MCF 10A (cell line): ENCODE measurements at regions of chr1 and their contacts with region 1.

Region 1: GRCh38 chr1:119140177-119141019 is at the start of gene WARS2:
- DNase-seq: peak; percentile 98
- H3K4me3 Mint-ChIP-seq: no peak within 1 kb of the TSS
- H3K27ac Mint-ChIP-seq: no peak within 1 kb of the TSS
- H3K4me1 Mint-ChIP-seq: peaks cover 29% of the 10 kb centered on the region
- H3K27me3 Mint-ChIP-seq: no peaks in the 10 kb centered on the region
- CTCF ChIP-seq: no peak
- total RNA-seq, gene WARS2: 17.4 and 27.7 TPM in 2 replicates

Region 2: GRCh38 chr1:118960026-118960561 is 180.3 kb before region 1 on chr1:
- CTCF ChIA-PET with region 1: no interaction called
- POLR2A ChIA-PET with region 1: no interaction called
- intact Hi-C with region 1: loop called (anchors 1 kb)
- DNase-seq: no peak
- H3K4me3 Mint-ChIP-seq: no peak overlapping the region
- H3K27ac Mint-ChIP-seq: no peak overlapping the region
- H3K4me1 Mint-ChIP-seq: peaks cover 24% of the 10 kb centered on the region
- H3K27me3 Mint-ChIP-seq: no peaks in the 10 kb centered on the region
- CTCF ChIP-seq: no peak

Region 3: DNA sequence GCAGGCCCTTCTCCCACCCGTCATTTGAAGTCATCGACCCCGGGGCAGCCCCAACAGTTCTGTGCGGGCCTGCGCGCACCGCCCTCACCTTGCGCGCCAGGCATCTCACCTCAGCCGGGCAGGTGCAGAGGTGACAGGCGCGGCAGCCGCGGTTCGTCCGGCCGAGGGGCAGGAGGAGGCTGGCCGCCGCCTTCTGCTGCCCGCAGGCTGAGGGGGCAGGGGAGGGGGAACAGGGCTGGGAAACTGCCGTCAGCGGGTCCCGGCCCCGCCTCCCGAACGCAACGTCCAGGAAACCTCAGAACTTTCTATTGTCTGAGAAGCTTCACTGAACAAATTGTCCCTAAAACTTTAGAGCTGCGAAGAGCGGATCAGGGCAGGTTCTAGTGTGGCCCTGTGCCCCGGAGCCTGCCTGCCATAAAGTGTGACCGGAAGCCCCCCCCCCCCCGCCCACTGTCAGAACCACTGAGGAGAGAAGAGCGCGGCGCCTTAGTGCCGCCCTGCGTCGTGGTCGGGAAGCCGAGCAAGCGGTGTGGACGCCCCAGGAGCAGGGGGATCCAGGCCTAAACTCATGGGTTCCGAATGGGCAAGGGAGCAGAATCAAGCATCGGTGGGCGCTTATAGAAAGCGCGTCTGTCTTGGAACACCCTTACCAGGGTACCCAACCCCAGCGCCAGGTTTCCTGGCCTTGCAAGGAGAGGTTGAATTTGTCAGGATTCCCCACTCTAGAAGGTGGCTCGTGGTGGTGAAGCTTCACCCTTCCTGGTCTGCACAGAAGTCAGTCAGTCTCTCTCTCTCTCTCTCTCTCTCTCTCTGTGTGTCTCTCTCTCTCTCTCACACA is 139.0 kb before region 1 on chr1:
- CTCF ChIA-PET with region 1: interaction called, 3 read pairs
- POLR2A ChIA-PET with region 1: no interaction called
- intact Hi-C with region 1: loop called (anchors 1 kb)
- DNase-seq: no peak
- H3K4me3 Mint-ChIP-seq: peak overlapping the region; percentile 67
- H3K27ac Mint-ChIP-seq: peak overlapping the region; percentile 92
- H3K4me1 Mint-ChIP-seq: peaks cover 9% of the 10 kb centered on the region
- H3K27me3 Mint-ChIP-seq: no peaks in the 10 kb centered on the region
- CTCF ChIP-seq: no peak

Region 4: GRCh38 chr1:119040906-119041305 is 99.5 kb before region 1 on chr1:
- CTCF ChIA-PET with region 1: no interaction called
- POLR2A ChIA-PET with region 1: interaction called, 10 read pairs
- intact Hi-C with region 1: loop called (anchors 1 kb)
- DNase-seq: peak; percentile 63
- H3K4me3 Mint-ChIP-seq: no peak overlapping the region
- H3K27ac Mint-ChIP-seq: no peak overlapping the region
- H3K4me1 Mint-ChIP-seq: peaks cover 22% of the 10 kb centered on the region
- H3K27me3 Mint-ChIP-seq: no peaks in the 10 kb centered on the region
- CTCF ChIP-seq: no peak

Region 5: GRCh38 chr1:119046785-119047438 is 93.5 kb before region 1 on chr1:
- CTCF ChIA-PET with region 1: no interaction called
- POLR2A ChIA-PET with region 1: interaction called, 10 read pairs
- intact Hi-C with region 1: no loop called
- DNase-seq: no peak
- H3K4me3 Mint-ChIP-seq: peak overlapping the region; percentile 17
- H3K27ac Mint-ChIP-seq: peak overlapping the region; percentile 86
- H3K4me1 Mint-ChIP-seq: peaks cover 26% of the 10 kb centered on the region
- H3K27me3 Mint-ChIP-seq: no peaks in the 10 kb centered on the region
- CTCF ChIP-seq: no peak

Region 6: DNA sequence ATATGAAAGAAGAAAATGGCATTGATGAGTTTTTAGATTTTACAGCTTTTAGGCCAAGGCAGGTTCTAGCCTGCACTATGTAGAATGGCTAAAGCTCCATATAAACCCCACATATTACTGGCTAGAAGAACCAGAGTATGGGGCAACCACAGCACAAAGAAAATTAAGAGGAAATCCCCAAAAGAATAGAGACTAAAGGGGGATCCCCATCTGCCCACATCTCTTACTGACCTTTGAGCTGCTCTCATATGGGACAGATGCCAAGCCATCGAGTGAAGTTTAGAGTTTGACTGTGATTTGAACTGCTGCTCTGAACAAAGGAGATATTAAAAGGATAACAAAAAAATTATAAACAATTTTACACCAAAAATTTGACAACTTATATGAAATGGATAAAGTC is 126.0 kb after region 1 on chr1:
- CTCF ChIA-PET with region 1: no interaction called
- POLR2A ChIA-PET with region 1: interaction called, 3 read pairs
- intact Hi-C with region 1: loop called (anchors 5 kb)
- DNase-seq: no peak
- H3K4me3 Mint-ChIP-seq: no peak overlapping the region
- H3K27ac Mint-ChIP-seq: no peak overlapping the region
- H3K4me1 Mint-ChIP-seq: no peaks in the 10 kb centered on the region
- H3K27me3 Mint-ChIP-seq: no peaks in the 10 kb centered on the region
- CTCF ChIP-seq: no peak

Region 7: DNA sequence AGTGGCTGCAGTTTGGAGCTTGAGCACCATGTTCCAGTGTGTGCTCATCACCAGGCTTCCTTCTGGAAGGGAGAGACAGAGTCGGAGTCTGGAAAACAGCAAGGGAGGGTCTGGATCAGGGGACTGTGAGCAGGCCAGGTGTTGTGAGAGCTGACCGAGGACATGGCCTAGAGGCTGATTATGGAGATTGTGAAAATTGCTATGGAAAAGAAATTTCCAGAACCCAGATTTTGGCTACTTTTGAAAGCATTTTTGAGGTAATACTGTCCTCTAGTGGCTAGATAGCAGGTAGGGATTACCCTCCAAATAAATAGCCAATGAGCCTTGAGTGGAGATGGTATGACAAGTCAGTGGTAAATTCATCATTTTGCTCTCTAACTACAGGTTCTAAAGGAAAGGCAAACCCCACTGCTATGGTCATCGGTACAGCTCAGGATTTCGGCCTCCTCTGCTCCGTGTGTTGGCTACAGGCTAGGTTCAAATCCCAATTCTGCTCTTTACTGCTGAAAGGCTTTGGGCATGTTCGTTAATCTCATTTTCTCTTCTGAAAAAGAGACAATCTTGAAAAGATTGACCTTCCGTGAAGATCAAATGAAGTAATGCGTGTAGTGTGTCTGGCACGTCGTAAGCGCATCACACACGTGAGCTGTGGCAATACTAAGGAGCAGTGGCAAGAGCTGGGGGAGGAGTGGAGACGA is 227.2 kb after region 1 on chr1:
- CTCF ChIA-PET with region 1: interaction called, 3 read pairs
- POLR2A ChIA-PET with region 1: interaction called, 3 read pairs
- intact Hi-C with region 1: loop called (anchors 1 kb)
- DNase-seq: peak; percentile 60
- H3K4me3 Mint-ChIP-seq: no peak overlapping the region
- H3K27ac Mint-ChIP-seq: no peak overlapping the region
- H3K4me1 Mint-ChIP-seq: peaks cover 14% of the 10 kb centered on the region
- H3K27me3 Mint-ChIP-seq: no peaks in the 10 kb centered on the region
- CTCF ChIP-seq: peak; percentile 94